ENCODE measurements at regions of chr12 and their contacts with region 1.

Region 1: DNA sequence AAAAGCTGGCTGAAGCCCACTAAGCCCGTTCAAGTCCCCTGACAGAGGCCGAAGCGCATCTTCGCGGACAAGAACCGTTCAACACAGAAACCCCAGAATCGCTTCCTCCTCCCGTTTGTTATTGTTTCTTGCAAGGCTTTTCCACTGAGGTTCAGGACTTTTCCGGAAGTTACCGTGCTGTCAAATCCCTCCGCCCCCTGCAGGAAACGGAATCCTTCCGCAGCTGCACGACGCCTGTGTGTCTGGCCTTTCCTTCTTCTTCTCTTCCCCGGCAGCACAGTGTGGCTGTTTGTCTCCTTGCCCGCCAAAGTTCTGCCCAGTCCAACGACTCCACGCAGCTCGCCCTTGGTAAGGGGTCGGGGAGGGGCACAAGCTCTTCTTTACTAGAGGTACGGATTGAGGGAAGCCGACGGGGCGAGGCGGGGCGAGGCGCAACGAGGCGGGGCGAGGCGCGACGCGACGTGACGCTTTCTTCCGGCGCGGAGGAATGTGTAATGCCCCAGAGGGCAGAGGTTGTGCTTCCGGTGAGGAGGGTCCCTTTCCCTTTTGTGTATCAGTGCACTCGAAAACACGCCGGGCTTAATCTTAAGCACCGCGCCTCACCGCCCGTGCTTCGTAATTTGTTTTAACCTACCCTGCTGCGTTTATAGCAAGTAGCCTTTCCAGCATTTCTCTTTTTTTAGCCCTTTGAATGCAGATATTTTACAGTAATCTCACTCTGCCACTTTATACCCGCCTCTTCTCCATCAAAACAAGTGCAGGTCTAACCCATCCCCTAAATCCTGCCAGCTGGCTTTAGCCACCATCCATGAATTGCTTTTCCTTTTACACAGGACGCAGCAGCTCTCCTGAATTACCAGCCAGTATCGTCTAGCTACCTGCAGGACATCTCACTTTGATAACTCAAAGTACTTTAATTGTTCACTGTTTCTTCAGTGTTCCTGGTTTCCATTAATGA is at the start of gene KDM5A:
- DNase-seq: peak; percentile 93
- ATAC-seq: peak; percentile 92
- H3K4me3 Mint-ChIP-seq: peak within 1 kb of the TSS; percentile 95
- H3K27ac Mint-ChIP-seq: peak within 1 kb of the TSS; percentile 100
- H3K4me1 Mint-ChIP-seq: peaks cover 33% of the 10 kb centered on the region
- H3K27me3 Mint-ChIP-seq: no peaks in the 10 kb centered on the region
- total RNA-seq, gene KDM5A: 105 to 116 TPM

Region 2: DNA sequence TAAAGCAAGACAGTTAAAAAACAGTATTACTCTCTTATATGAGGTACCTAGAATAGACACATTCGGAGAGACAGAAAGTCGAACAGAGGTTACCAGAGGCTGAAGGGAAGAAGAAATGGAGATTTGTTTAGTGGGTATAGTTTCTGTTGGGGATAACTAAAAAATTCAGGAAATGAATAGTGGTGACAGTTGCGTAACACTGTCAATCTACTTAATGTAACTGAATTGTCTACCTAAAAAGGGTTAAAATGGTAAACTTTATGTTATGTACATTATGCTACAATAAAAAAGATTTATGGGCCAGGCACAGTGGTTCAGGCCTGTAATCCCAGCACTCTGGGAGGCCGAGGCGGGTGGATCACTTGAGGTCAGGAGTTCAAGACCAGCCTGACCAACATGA is 96.2 kb before region 1 on chr12:
- POLR2A ChIA-PET with region 1: no interaction called
- DNase-seq: no peak
- ATAC-seq: no peak
- H3K4me3 Mint-ChIP-seq: no peak overlapping the region
- H3K27ac Mint-ChIP-seq: no peak overlapping the region
- H3K4me1 Mint-ChIP-seq: peaks cover 2% of the 10 kb centered on the region
- H3K27me3 Mint-ChIP-seq: no peaks in the 10 kb centered on the region

Region 3: GRCh38 chr12:401235-402028 is 12.0 kb after region 1 on chr12 and contains the start of gene CCDC77:
- POLR2A ChIA-PET with region 1: interaction called, 44 read pairs
- DNase-seq: peak; percentile 94
- ATAC-seq: peak; percentile 99
- H3K4me3 Mint-ChIP-seq: no peak within 1 kb of the TSS
- H3K27ac Mint-ChIP-seq: no peak within 1 kb of the TSS
- H3K4me1 Mint-ChIP-seq: peaks cover 8% of the 10 kb centered on the region
- H3K27me3 Mint-ChIP-seq: no peaks in the 10 kb centered on the region
- total RNA-seq, gene CCDC77: 14.6 to 15.9 TPM